ENCODE measurements at regions of chr9 and their contacts with region 1.

Region 1: GRCh38 chr9:130570200-130570599 is 9.2 kb upstream of the FUBP3 start:
- DNase-seq: no peak
- ATAC-seq: no peak

Region 2: DNA sequence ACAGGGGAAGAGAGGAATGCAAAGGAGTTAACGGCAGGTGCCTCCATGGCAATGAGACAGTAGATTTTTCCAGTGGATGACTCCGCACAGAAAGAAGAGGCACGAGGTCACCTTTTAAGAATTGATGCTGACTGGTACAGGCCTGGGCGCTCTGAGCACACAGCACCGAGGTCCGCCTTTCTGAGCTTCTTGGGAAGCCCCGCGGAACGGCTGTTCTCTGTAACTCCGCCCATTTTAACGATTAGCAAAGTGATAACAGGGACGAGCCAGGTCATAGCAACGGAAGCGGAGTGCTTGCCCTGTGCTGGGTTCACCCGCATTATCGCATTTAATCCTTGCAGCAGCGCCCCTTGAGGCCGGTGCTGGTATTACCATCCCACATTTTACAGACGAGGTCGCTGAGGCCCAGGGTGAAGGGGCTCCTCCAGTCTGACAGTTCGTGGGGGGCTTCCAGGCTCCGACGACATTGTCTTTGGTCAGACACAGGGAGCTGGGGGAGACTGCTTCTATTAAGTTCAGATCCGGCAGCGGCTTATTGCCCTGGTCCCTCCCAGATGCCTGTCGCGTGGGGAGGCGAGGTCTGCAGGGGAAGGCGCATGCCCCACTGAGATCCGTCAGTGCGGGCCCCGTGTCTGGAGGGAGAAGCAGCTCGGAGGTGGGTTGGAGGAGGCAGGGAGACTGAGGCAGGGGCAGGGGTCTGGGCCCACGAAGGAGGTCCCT is 327.0 kb before region 1 on chr9:
- intact Hi-C with region 1: no loop called
- DNase-seq: peak; percentile 90
- ATAC-seq: peak; percentile 67

Region 3: GRCh38 chr9:130535818-130536561 is 34.2 kb before region 1 on chr9:
- intact Hi-C with region 1: loop called (anchors 5 kb)
- DNase-seq: no peak
- ATAC-seq: peak; percentile 76